ENCODE measurements at regions of chr10 and their contacts with region 1.

Region 1: DNA sequence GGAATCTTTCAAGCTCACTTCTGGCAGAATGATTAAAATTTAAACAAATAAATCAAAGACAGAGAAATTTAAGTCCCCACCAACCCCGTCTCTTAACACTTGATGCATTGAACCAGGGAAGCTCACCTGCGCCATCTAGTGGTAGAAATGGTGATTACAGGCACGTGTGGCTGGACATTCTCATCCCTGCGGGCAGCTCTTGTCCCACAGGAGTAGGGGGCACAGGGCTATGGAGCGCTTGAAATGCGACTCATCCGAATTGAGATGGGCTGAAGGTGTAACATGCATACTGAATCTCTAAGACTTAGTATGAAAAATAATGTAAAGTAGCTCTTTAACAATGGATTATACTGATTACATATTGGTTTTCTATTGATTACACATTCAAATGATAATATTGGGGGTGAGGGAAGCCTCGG is 24.8 kb upstream of the SLIT1 start:
- DNase-seq: peak; percentile 32 to 71
- H3K4me3 ChIP-seq: no peak overlapping the region
- H3K27ac ChIP-seq: no peak overlapping the region
- H3K4me1 ChIP-seq: no peaks in the 10 kb centered on the region
- H3K27me3 ChIP-seq: no peaks in the 10 kb centered on the region
- CTCF ChIP-seq: peak; percentile 86 to 97 (median 89)
- POLR2A ChIP-seq: no peak

Region 2: GRCh38 chr10:97072851-97073665 is 137.5 kb before region 1 on chr10:
- intact Hi-C with region 1: loop called (anchors 10 kb)
- DNase-seq: peak; percentile 59 to 71
- H3K4me3 ChIP-seq: no peak overlapping the region
- H3K27ac ChIP-seq: no peak overlapping the region
- H3K4me1 ChIP-seq: no peaks in the 10 kb centered on the region
- H3K27me3 ChIP-seq: no peaks in the 10 kb centered on the region
- CTCF ChIP-seq: peak; percentile 38 to 86 (median 72)
- POLR2A ChIP-seq: no peak

Measured in breast epithelium (tissue), 4 donors.